Mammary epithelial cell (primary cell): ENCODE measurements at regions of chr2 and their contacts with region 1.

Region 1: DNA sequence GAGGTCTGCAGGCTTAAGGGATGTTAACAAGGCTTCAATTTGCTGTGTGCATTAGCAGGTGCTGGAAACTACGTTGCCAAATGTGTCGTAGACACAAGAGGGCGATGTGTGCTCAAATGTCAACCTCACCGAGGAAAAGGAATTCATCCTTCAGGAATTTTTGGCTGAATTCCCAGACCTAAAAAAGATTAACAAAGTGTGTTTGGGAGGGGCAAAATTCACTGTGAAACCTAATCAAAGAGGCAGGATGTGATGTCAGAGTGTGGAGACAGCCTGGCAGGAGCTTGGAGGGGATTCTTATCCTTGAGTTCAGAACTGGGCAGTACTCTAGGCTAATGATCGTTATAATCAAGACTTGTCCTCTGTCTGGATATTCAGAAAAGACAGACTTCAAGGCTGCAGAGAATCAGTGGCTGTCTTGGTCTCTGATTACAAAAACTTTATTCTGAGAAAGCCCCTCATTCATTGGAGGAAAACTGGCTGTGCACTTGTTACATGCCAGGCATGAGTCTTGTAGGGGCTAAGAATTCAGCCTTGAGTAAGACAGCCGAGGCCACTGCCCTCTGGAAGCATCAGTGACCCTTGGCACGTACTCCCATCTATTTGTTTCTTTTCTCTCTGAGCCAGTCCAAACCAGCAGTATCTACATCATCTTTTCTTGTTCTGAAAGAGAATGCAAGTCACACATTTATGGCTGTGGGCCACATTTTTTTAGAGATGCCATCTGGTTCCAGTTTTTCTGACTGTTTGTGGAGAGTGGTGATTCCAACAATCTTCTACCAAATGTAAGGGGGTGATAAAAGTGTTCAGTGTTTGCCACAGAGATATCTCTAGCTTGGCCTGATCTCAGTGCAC is 18.7 kb upstream of the SCYGR1 start:
- DNase-seq: peak; percentile 95
- H3K4me3 ChIP-seq: no peak overlapping the region
- H3K27ac ChIP-seq: peak overlapping the region; percentile 87
- H3K4me1 ChIP-seq: peaks cover 20% of the 10 kb centered on the region
- H3K27me3 ChIP-seq: no peaks in the 10 kb centered on the region
- CTCF ChIP-seq: peak; percentile 82 to 83

Region 2: GRCh38 chr2:227460070-227460485 is 53.7 kb after region 1 on chr2:
- CTCF ChIA-PET with region 1: no interaction called
- dilution Hi-C with region 1: no loop called
- in situ Hi-C with region 1: no loop called
- intact Hi-C with region 1: no loop called
- DNase-seq: peak; percentile 78
- H3K4me3 ChIP-seq: no peak overlapping the region
- H3K27ac ChIP-seq: no peak overlapping the region
- H3K4me1 ChIP-seq: peaks cover 2% of the 10 kb centered on the region
- H3K27me3 ChIP-seq: no peaks in the 10 kb centered on the region
- CTCF ChIP-seq: no peak

Region 3: GRCh38 chr2:227471924-227472264 is 65.5 kb after region 1 on chr2 and contains the start of gene AGFG1:
- CTCF ChIA-PET with region 1: interaction called, 3 read pairs
- dilution Hi-C with region 1: no loop called
- in situ Hi-C with region 1: no loop called
- intact Hi-C with region 1: loop called (anchors 1 kb)
- DNase-seq: peak; percentile 75
- H3K4me3 ChIP-seq: peak within 1 kb of the TSS; percentile 97 to 98 (median 97)
- H3K27ac ChIP-seq: peak within 1 kb of the TSS; percentile 82
- H3K4me1 ChIP-seq: peaks cover 23% of the 10 kb centered on the region
- H3K27me3 ChIP-seq: no peaks in the 10 kb centered on the region
- CTCF ChIP-seq: peak; percentile 94 to 97
- total RNA-seq, gene AGFG1: 92.2 to 108 TPM

Region 4: GRCh38 chr2:227578651-227579050 is 172.2 kb after region 1 on chr2:
- CTCF ChIA-PET with region 1: no interaction called
- dilution Hi-C with region 1: no loop called
- in situ Hi-C with region 1: no loop called
- intact Hi-C with region 1: loop called (anchors 1 kb)
- DNase-seq: no peak
- H3K4me3 ChIP-seq: no peak overlapping the region
- H3K27ac ChIP-seq: no peak overlapping the region
- H3K4me1 ChIP-seq: no peaks in the 10 kb centered on the region
- H3K27me3 ChIP-seq: no peaks in the 10 kb centered on the region
- CTCF ChIP-seq: peak in 1 of 2 donors; percentile 17

Region 5: DNA sequence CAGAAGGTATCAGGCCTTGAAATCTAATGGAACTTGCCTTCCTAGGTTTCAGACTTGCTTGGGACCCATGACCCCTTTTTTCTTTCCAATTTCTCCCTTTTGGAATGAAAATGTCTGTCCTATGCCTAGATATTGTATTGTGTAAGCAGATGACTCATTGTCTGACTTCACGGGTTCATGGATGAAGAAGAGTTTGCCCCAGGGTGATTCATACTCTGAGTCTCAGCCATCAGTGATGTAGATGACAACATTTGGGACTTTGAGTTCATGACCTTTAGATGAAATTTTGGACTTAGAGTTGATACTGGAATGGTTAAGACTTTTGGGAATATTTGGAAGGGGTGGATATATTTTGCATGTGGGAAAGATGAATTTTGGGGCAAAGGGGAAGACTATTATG is 249.1 kb after region 1 on chr2:
- CTCF ChIA-PET with region 1: no interaction called
- dilution Hi-C with region 1: no loop called
- in situ Hi-C with region 1: no loop called
- intact Hi-C with region 1: loop called (anchors 1 kb)
- DNase-seq: peak; percentile 82
- H3K4me3 ChIP-seq: no peak overlapping the region
- H3K27ac ChIP-seq: no peak overlapping the region
- H3K4me1 ChIP-seq: peaks cover 13% of the 10 kb centered on the region
- H3K27me3 ChIP-seq: no peaks in the 10 kb centered on the region
- CTCF ChIP-seq: no peak

Region 6: DNA sequence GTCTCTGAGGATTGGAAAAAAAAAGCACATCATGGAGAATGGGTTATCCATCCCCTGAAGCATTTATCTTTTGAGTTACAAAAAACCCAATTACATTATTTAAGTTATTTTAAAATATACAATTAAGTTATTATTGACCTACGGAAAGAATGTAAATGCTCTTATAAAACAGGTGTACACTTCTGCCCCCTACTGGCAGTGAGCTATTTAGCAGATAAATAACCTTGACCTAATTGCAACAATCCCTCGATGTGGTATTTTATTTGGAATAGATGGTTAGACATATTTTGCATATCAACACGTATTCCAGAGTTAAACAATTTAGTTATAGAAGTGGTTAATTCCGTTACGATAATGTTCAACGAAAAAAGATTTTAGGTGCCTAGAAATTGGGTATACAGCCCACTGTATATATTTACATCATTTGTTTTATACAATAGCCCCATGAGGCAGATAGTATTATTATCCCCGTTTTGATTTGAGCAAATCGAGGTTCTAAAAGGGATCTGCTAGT is 455.9 kb after region 1 on chr2:
- CTCF ChIA-PET with region 1: no interaction called
- dilution Hi-C with region 1: no loop called
- in situ Hi-C with region 1: loop called in 1 of 2 experiments (anchors 25 kb)
- intact Hi-C with region 1: loop called (anchors 2 kb)
- DNase-seq: peak; percentile 36
- H3K4me3 ChIP-seq: no peak overlapping the region
- H3K27ac ChIP-seq: peak overlapping the region; percentile 69
- H3K4me1 ChIP-seq: peaks cover 33% of the 10 kb centered on the region
- H3K27me3 ChIP-seq: no peaks in the 10 kb centered on the region
- CTCF ChIP-seq: peak; percentile 68 to 71

Region 7: GRCh38 chr2:227884511-227884947 is 478.1 kb after region 1 on chr2:
- CTCF ChIA-PET with region 1: no interaction called
- dilution Hi-C with region 1: no loop called
- in situ Hi-C with region 1: no loop called
- intact Hi-C with region 1: loop called (anchors 1 kb)
- DNase-seq: peak; percentile 58
- H3K4me3 ChIP-seq: no peak overlapping the region
- H3K27ac ChIP-seq: no peak overlapping the region
- H3K4me1 ChIP-seq: peaks cover 7% of the 10 kb centered on the region
- H3K27me3 ChIP-seq: no peaks in the 10 kb centered on the region
- CTCF ChIP-seq: peak; percentile 90 to 98